ENCODE measurements at regions of chr6 and their contacts with region 1.

Region 1: DNA sequence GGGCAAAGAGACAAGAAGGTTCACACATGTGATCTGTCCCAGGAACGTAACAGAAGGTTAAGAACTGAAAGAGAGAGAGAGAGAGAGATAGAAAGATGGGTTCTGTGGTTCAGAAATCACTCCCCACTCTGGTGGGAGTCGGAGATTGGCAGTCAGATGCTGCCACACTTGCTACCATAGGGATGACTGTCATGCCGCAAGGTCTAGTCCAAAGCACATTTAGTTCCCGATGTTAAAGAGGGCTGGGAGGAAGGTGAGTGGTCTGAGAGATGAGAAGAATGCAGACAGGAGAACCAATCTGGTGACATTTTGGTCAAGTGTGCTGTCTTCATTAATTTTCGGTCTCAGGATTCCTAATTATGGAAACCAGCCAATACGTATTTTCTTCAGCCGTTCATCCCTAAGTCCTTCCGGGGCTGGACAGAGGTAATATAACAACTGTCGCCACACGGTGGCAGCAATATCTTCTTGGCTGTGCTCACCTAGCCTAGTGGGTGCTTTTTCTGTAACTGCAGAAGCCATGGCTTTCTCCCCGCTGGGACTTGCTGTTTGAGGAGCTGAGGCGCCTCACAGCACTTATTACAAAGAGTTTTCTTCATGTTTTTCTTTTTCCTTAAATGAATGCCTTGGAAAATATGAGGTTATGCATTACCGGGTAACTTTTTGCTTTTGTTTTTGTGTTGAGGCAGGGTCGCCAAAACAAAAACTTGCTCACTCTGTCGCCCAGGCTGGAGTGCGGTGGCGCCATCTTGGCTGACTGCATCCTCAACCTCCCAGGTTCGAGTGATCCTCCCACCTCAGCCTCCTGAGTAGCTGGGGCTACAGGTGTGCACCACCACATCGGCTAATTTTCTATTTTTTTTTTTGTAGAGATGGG is 46.0 kb downstream of the SLC35D3 start:
- DNase-seq: peak in 8 of 9 donors; percentile 7 to 48 (median 30)
- ATAC-seq: peak; percentile 87
- H3K4me3 ChIP-seq: no peak overlapping the region
- H3K4me3 Mint-ChIP-seq: no peak overlapping the region
- H3K27ac ChIP-seq: no peak overlapping the region
- H3K27ac Mint-ChIP-seq: no peak overlapping the region
- H3K4me1 ChIP-seq: no peaks in the 10 kb centered on the region
- H3K4me1 Mint-ChIP-seq: peaks cover 0 to 9% (median 0%) of the 10 kb centered on the region in 7 donors
- H3K27me3 ChIP-seq: no peaks in the 10 kb centered on the region
- H3K27me3 Mint-ChIP-seq: peaks cover 29 to 59% (median 47%) of the 10 kb centered on the region in 5 donors

Region 2: DNA sequence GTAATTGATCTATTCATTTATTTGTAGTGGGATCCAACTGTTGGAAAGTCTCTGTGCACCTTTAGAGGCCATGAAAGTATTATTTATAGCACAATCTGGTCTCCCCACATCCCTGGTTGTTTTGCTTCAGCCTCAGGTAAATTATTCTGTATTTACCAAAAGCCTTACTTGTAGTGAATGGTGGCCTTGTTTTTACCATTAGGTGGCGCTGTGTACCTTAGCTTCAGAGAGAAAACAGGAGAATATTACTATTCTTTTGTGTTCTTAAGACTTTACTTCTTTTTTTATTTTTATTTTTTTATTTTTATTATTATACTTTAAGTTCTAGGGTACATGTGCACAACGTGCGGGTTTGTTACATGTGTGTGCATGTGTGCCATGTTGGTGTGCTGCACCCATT is 122.1 kb before region 1 on chr6:
- CTCF ChIA-PET with region 1: no interaction called
- POLR2A ChIA-PET with region 1: no interaction called
- intact Hi-C with region 1: loop called in 1 of 2 experiments (anchors 2 kb)
- DNase-seq: peak in 3 of 9 donors; percentile 6 to 19 (median 12)
- ATAC-seq: peak; percentile 58
- H3K4me3 ChIP-seq: no peak overlapping the region
- H3K4me3 Mint-ChIP-seq: no peak overlapping the region
- H3K27ac ChIP-seq: no peak overlapping the region
- H3K27ac Mint-ChIP-seq: no peak overlapping the region
- H3K4me1 ChIP-seq: no peaks in the 10 kb centered on the region
- H3K4me1 Mint-ChIP-seq: peaks cover 0 to 17% (median 10%) of the 10 kb centered on the region in 7 donors
- H3K27me3 ChIP-seq: no peaks in the 10 kb centered on the region
- H3K27me3 Mint-ChIP-seq: no peaks in the 10 kb centered on the region